ENCODE measurements at regions of chr13 and their contacts with region 1.

Region 1: DNA sequence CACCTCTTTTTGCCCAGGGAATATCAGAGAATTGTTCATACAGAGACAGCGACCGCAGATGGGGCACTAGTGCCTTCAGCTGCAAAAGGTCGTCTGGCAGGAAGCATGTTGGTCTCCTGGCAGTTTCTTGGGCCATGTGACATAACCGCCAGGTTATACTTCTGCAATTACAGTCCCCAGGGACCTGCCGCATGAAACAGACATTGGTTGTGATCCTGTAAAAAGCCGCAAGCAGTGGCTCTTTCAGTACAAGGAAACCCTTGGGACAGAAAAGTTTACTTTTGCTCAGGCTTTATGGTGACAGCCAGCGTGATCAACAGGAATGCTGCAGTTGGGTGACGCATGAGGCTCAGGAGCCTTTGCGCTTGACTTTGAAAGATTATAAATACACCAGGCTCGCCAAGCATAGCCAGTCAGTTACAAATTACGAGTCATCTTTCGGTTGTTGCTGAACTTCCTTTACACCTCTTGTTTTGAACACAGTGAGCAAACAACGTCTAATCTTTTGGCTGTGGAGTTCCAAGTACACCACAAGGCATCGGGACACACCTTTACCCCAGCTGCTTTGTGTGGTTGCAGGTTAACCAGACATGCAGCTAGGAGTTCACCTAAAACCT is 50.5 kb upstream of the UBE2L5 start:
- DNase-seq: peak; percentile 60
- H3K4me3 Mint-ChIP-seq: peak overlapping the region; percentile 56
- H3K27ac Mint-ChIP-seq: peak overlapping the region; percentile 98
- H3K4me1 Mint-ChIP-seq: peaks cover 71% of the 10 kb centered on the region
- H3K27me3 Mint-ChIP-seq: no peaks in the 10 kb centered on the region

Region 2: DNA sequence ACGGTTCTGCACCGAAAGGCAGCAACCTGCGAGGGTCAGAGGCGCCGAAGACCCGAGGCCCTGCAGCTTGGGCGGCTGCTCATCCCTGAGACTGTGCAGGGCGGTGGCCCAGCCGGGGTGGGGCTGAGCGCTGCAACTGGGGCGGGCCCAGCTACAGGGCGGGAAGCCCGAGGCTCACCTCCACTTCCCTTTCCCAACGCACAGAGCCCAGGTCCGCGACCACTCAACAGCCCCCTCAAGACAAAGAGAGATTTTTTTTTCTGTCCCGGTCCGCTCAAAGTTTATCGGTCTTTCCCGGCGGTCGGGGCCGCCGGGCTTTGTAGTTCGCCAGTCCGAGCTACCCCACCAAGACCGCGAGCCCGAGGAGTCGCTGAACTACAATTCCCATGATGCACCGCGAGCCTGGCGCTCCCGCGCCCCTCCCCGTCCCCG is 65.0 kb before region 1 on chr13:
- intact Hi-C with region 1: loop called (anchors 5 kb)
- DNase-seq: peak; percentile 88
- H3K4me3 Mint-ChIP-seq: peak overlapping the region; percentile 86
- H3K27ac Mint-ChIP-seq: peak overlapping the region; percentile 80
- H3K4me1 Mint-ChIP-seq: peaks cover 38% of the 10 kb centered on the region
- H3K27me3 Mint-ChIP-seq: no peaks in the 10 kb centered on the region

Region 3: GRCh38 chr13:30388406-30389283 is 16.9 kb after region 1 on chr13:
- intact Hi-C with region 1: loop called (anchors 2 kb)
- DNase-seq: no peak
- H3K4me3 Mint-ChIP-seq: peak overlapping the region; percentile 46
- H3K27ac Mint-ChIP-seq: peak overlapping the region; percentile 85
- H3K4me1 Mint-ChIP-seq: peaks cover 40% of the 10 kb centered on the region
- H3K27me3 Mint-ChIP-seq: no peaks in the 10 kb centered on the region

Region 4: DNA sequence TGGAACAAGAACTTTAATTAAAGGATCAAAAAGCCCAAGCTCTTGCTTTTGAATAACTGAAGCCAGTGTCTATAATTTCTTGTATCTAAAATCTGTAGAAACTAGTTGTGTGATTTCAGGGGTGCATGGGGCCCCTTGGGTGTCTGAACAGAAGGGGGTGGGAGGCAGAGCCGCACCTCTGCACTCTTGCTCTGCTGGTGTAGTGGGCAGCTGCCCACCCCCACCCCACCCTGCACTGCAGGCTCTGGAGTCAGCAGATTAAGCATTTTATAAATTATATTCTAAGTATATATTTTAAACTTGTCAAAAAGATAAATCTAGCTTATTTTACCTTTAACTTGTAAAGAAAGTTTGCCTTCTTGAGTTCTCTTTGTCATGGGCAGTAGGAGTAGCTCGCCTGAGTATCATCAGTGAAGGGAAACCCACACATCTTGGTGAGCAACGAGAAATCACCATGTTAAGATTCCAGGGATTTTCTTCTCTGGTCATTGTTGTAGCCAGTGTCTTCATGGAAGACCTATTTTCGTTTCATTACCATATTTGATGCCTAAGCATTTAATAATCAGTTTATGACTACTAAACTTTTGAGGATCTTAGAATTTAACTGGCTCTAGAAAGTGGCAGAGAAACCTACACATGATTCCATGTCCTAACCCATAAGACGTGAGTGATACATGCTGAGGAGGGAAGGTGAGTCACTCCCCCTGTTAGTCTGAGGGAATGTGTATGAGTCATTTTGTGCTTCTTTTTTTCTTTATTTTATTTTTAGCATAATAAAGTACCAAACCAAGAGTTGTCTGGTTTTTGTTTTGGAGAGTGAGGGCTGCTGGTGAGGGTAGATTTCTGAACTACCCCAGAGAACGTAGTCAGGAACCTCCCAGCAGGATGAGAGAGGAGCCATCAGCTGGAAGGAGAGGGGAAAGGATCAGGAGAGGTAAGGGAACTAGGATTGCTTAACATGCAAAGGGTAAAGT is 58.3 kb after region 1 on chr13:
- intact Hi-C with region 1: loop called (anchors 2 kb)
- DNase-seq: no peak
- H3K4me3 Mint-ChIP-seq: peak overlapping the region; percentile 59
- H3K27ac Mint-ChIP-seq: peak overlapping the region; percentile 89
- H3K4me1 Mint-ChIP-seq: peaks cover 28% of the 10 kb centered on the region
- H3K27me3 Mint-ChIP-seq: no peaks in the 10 kb centered on the region

Region 5: DNA sequence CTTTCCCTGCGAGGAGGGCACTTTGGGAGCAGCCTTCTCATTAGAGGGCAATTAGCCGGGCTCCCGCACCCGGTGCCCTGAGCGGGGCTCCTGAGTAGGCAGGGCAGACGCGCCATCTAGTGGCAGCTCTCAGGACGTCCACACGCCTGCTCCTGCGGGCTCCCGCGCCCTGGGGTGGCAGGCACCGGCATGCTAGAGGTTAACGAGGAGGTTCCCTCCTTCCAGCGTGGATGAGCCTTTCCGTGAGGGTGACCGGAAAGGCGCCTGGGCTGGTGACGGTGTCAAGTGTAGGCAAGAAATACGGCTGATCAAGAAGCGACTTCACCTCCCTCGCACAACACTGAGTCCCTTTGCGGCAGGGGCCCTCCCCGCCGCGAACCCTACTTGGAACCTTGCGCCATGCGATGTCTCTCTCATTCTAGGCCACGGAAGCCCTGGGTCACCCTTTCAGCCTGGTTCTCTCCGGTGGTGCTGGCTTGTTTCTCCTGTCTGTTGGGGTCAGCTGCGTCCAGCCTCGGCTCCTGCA is 431.3 kb after region 1 on chr13:
- intact Hi-C with region 1: loop called (anchors 10 kb)
- DNase-seq: peak; percentile 76
- H3K4me3 Mint-ChIP-seq: peak overlapping the region; percentile 18
- H3K27ac Mint-ChIP-seq: no peak overlapping the region
- H3K4me1 Mint-ChIP-seq: peaks cover 10% of the 10 kb centered on the region
- H3K27me3 Mint-ChIP-seq: no peaks in the 10 kb centered on the region